Testis (tissue), 5 donors: ENCODE measurements at regions of chr3 and their contacts with region 1.

Region 1: DNA sequence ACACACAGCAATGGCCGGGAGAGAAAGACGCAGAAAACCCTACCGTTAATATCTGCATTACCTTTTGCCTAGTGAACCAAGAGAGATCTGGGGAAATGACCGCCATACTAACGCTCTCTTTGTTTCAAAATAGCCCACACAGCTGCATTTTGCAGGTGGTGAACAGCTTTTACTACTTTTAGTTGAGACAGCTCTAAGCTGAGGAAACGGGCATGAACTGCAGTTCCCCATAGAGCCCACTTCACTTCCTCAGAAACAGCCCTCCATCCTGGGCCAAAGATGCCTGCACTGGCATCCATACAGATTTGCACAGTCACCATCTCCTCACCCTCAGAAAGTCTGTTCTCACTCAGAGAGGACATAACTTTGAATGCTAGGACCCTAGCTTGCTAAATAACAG is 45.0 kb downstream of the ZNF860 start:
- DNase-seq: no peak
- H3K4me3 ChIP-seq: no peak overlapping the region
- H3K27ac ChIP-seq: no peak overlapping the region
- H3K4me1 ChIP-seq: no peaks in the 10 kb centered on the region
- H3K27me3 ChIP-seq: no peaks in the 10 kb centered on the region
- CTCF ChIP-seq: no peak
- POLR2A ChIP-seq: no peak

Region 2: DNA sequence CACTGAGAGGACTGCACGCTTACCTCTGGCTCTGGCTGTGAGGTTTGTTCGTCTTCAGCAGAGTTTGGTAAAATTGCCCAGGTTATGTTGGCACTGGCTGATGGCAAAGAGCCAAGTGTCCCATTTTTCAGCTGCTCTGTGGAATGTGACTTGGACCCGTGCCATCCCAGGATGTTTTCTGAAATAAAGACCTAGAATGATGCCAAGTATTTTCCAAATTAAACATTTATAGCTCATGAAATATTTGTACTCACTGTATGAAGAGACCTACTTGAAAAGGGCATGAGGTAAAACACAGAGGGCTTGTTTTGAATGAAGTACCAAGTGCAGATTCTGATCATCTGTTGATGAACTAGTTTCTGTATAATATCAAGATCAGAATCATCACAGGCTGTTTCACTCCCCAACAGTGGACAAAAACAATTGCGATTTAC is 293.3 kb before region 1 on chr3:
- intact Hi-C with region 1: no loop called
- DNase-seq: peak; percentile 33
- H3K4me3 ChIP-seq: no peak overlapping the region
- H3K27ac ChIP-seq: no peak overlapping the region
- H3K4me1 ChIP-seq: peaks cover 3% of the 10 kb centered on the region
- H3K27me3 ChIP-seq: no peaks in the 10 kb centered on the region
- CTCF ChIP-seq: no peak
- POLR2A ChIP-seq: no peak

Region 3: DNA sequence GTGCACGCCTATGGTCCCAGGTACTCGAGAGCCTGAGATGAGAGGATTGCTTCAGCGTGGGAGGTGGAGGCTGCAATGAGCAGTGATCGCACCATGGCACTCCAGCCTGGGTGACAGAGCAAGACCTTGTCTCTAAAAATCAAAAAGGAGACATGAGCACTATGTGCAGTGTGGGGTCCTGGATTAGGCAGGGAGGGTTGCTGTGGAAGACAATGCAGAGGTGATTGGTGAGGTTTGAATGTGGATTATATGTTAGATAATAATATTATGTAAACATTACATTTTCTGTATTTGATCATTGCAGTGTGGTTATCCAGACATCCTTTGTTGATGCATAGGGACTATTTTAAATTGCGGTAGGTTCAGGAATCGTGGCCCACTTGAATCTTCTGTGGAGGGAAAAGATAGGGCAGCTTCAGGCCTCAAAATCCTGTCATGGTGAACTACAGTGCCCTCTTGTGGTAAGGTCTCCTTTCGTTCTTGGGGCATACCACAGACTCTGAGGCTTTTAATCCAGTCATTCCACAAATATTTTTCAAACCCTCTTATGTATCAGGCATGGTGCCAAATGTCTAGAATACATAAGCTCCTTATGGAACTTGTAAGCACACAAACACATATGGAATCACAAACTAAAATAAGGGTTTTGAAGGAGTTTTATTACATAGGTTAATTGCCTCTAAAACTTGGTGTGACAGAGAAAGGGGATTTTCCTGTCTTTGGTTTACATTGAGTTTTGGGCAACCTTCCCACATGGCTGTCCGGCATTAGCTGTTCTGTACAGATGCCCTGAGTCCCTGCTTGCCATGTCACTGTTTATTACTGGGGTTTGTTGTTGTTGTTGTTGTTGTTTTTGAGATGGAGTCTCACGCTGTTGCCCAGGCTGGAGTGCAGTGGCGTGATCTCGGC is 117.5 kb after region 1 on chr3:
- intact Hi-C with region 1: loop called (anchors 10 kb)
- DNase-seq: peak; percentile 75
- H3K4me3 ChIP-seq: no peak overlapping the region
- H3K27ac ChIP-seq: no peak overlapping the region
- H3K4me1 ChIP-seq: no peaks in the 10 kb centered on the region
- H3K27me3 ChIP-seq: no peaks in the 10 kb centered on the region
- CTCF ChIP-seq: peak; percentile 59 to 76 (median 66)
- POLR2A ChIP-seq: no peak

Region 4: DNA sequence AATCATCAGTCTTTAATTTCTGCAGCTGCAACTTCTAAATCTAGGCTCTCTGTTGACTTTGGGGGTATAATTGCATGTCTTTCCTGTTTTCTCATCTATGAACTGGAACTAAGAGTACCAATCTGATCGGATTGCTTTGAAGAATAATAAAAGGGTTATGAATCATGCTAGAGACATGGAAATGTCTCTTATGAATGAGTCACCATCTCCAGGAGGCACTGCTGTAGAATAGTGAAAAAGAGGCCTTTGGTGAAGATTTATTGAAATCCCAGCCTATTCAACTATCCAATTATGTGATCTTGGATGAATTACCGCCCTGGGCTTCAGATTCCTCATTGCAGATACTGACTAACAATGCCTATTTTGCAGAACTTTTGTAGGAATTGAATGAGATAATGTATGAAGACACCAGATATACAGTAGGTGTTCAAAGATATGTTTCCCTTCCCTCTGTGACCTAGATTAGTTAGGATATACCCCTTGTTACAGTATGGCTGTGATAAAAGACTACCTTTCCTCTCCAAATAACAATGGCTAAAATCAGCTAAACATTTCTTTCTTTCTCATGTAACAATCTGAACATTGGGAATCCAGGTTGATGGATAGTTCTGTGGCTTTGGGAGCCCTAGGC is 200.4 kb after region 1 on chr3:
- intact Hi-C with region 1: no loop called
- DNase-seq: no peak
- H3K4me3 ChIP-seq: no peak overlapping the region
- H3K27ac ChIP-seq: no peak overlapping the region
- H3K4me1 ChIP-seq: no peaks in the 10 kb centered on the region
- H3K27me3 ChIP-seq: no peaks in the 10 kb centered on the region
- CTCF ChIP-seq: no peak
- POLR2A ChIP-seq: no peak

Region 5: GRCh38 chr3:32557643-32558352 is 531.2 kb after region 1 on chr3:
- intact Hi-C with region 1: no loop called
- DNase-seq: no peak
- H3K4me3 ChIP-seq: no peak overlapping the region
- H3K27ac ChIP-seq: no peak overlapping the region
- H3K4me1 ChIP-seq: no peaks in the 10 kb centered on the region
- H3K27me3 ChIP-seq: no peaks in the 10 kb centered on the region
- CTCF ChIP-seq: no peak
- POLR2A ChIP-seq: no peak